HEK293 (cell line): ENCODE measurements at regions of chr14 and their contacts with region 1.

Region 1: DNA sequence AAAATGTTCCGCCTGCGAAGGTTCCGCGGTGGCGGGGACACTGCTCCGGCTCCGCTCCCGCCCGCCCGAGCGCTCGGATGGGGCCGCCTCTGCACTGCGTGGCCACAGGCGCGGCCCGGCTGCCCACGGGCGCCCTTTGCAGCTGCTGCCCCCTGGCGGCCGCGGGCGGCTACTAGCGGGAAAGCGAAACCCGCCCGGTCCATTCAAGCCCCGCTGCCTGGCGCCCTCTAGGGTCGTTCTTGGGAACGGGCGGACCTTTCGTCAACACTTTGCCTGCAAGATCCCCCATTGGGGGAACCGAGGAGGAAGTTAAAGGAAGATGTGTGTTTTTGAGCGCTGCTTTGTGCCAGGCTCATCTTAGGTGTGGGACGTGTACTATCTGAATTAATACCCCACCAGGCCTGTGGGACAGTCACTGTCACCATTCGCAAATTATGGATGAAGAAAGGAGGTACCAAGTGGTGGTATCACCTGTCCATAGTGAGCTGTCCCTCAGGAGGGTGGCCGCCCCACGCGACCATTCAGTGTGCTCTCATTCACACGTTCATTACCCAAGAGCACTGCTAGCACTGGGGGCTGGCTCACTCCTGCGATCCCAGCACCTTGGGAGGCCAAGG is 19.4 kb downstream of the GPR132 start:
- H3K4me3 ChIP-seq: no peak overlapping the region; the same call in 1 of the 2 replicates
- H3K27ac ChIP-seq: no peak overlapping the region
- H3K4me1 ChIP-seq: peaks cover 2% of the 10 kb centered on the region; the same call in 1 of the 2 replicates
- CTCF ChIP-seq: peak; percentile 96

Region 2: GRCh38 chr14:104895786-104896661 is 149.8 kb before region 1 on chr14:
- CTCF ChIA-PET with region 1: interaction called, 19 read pairs
- POLR2A ChIA-PET with region 1: no interaction called
- H3K4me3 ChIP-seq: no peak overlapping the region
- H3K27ac ChIP-seq: 0 out of 2 replicates have a peak overlapping the region, but pooled peaks have one; percentile 41
- H3K4me1 ChIP-seq: peaks cover 7% of the 10 kb centered on the region
- CTCF ChIP-seq: no peak

Region 3: DNA sequence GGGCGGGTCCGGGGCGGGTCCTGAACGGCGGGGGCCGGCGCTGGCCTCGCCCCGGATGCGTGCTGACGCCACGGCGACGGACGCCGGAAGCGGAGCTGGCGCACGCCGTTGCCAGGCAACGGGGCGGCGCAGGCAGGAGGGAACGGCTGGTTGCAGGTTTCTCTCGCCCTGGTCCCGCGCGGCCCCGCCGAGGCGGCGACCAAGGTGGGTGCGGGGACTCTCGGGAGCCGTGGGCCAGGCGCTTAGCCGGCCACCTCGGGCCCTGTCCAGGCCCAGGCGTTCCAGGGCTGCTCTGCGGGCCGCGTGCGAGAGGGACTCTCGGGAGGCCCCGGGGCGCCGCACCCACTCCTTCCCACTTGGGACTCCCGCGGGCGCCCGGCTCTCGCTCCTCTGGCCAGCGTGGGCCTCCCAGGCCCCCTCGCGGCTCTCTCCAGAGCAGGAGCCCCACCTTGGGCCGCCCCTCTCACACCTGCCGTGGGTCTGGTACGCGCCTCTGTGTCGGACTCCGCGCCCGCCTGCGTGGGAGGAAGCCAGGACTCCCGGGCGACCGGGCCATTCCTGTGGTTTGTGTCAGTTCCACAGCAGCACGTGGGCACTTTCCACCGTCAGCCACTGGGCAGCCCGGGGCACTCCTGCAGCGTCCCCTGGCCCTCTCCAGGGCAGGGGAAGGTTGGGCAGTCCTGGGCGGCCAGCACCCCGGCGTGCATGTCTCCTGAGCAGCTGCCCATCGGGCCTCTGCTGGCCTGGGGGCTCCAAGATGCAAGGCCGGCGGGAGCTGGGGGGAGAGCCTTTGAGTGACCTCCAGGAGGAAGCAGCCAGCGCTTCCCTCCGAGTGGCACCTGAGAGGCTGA is 59.9 kb before region 1 on chr14 and contains the start of gene CLBA1:
- CTCF ChIA-PET with region 1: interaction called, 11 read pairs
- POLR2A ChIA-PET with region 1: no interaction called
- H3K4me3 ChIP-seq: peak within 1 kb of the TSS; percentile 76
- H3K27ac ChIP-seq: peak within 1 kb of the TSS; percentile 55; the same call in 1 of the 2 replicates
- H3K4me1 ChIP-seq: no peaks in the 10 kb centered on the region
- CTCF ChIP-seq: no peak

Region 4: GRCh38 chr14:105012171-105012985 is 33.4 kb before region 1 on chr14:
- CTCF ChIA-PET with region 1: interaction called, 59 read pairs
- POLR2A ChIA-PET with region 1: no interaction called
- H3K4me3 ChIP-seq: no peak overlapping the region
- H3K27ac ChIP-seq: peak overlapping the region; percentile 9; the same call in 1 of the 2 replicates
- H3K4me1 ChIP-seq: peaks cover 12% of the 10 kb centered on the region
- CTCF ChIP-seq: 0 out of 2 replicates have a peak, but pooled peaks have one; percentile 28

Region 5: DNA sequence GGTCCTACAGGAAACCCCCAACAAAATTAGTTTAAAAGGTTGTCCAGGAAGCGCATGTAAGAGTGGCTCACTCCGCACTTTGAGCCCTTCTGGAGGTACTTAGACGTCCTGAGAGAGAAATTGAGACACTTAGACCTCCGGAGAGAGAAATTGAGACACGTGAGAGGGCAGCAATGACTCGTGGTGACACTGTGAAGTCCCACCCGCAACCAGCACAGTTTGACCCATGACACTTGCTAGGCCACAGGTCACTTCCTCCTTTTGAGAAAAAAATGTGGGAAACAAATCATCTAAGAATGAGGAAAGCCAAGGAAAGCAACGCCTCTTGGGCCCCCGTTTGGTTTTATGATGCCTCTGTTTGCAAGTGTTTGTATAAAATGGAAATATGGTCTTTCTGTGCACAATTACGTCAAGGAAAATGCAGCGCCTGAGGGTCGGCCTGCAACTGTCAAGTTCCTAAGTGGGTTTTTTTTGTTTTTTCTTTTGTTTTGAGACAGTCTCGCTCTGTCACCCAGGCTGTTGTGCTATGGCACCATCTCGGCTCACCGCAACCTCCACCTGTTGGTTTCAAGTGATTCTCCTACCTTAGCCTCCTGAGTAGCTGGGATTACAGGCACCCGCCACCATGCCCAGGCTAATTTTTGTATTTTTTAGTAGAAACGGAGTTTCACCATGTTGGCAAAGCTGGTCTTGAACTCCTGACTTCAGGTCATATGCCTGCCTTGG is 11.3 kb before region 1 on chr14:
- CTCF ChIA-PET with region 1: interaction called, 41 read pairs
- POLR2A ChIA-PET with region 1: interaction called, 4 read pairs
- H3K4me3 ChIP-seq: peak overlapping the region; percentile 62
- H3K27ac ChIP-seq: no peak overlapping the region
- H3K4me1 ChIP-seq: peaks cover 2% of the 10 kb centered on the region; the same call in 1 of the 2 replicates
- CTCF ChIP-seq: no peak

Region 6: GRCh38 chr14:105138021-105138541 is 92.3 kb after region 1 on chr14:
- CTCF ChIA-PET with region 1: no interaction called
- POLR2A ChIA-PET with region 1: no interaction called
- H3K4me3 ChIP-seq: no peak overlapping the region
- H3K27ac ChIP-seq: no peak overlapping the region
- H3K4me1 ChIP-seq: no peaks in the 10 kb centered on the region
- CTCF ChIP-seq: no peak